H1 (cell line): ENCODE measurements at regions of chrX and their contacts with region 1.

Region 1: GRCh38 chrX:108224727-108225621 is 133.4 kb downstream of the ATG4A start:
- DNase-seq: no peak
- H3K4me3 ChIP-seq: no peak overlapping the region
- H3K27ac ChIP-seq: no peak overlapping the region
- H3K4me1 ChIP-seq: no peaks in the 10 kb centered on the region
- H3K27me3 ChIP-seq: no peaks in the 10 kb centered on the region
- CTCF ChIP-seq: peak in 2 of 3 experiments; percentile 51 to 52; a peak in 3 of 4 replicates
- EP300 ChIP-seq: no peak
- POLR2A ChIP-seq: no peak
- RAD21 ChIP-seq: peak; percentile 81 to 82

Region 2: GRCh38 chrX:108211301-108211700 is 13.7 kb before region 1 on chrX:
- CTCF ChIA-PET with region 1: interaction called, 18 read pairs
- POLR2A ChIA-PET with region 1: no interaction called
- DNase-seq: no peak
- H3K4me3 ChIP-seq: no peak overlapping the region
- H3K27ac ChIP-seq: no peak overlapping the region
- H3K4me1 ChIP-seq: no peaks in the 10 kb centered on the region
- H3K27me3 ChIP-seq: no peaks in the 10 kb centered on the region
- CTCF ChIP-seq: no peak
- EP300 ChIP-seq: no peak
- POLR2A ChIP-seq: no peak
- RAD21 ChIP-seq: no peak

Region 3: GRCh38 chrX:108235986-108236385 is 11.0 kb after region 1 on chrX:
- CTCF ChIA-PET with region 1: interaction called, 12 read pairs
- POLR2A ChIA-PET with region 1: no interaction called
- DNase-seq: no peak
- H3K4me3 ChIP-seq: no peak overlapping the region
- H3K27ac ChIP-seq: no peak overlapping the region
- H3K4me1 ChIP-seq: no peaks in the 10 kb centered on the region
- H3K27me3 ChIP-seq: no peaks in the 10 kb centered on the region
- CTCF ChIP-seq: no peak
- EP300 ChIP-seq: no peak
- POLR2A ChIP-seq: no peak
- RAD21 ChIP-seq: no peak

Region 4: DNA sequence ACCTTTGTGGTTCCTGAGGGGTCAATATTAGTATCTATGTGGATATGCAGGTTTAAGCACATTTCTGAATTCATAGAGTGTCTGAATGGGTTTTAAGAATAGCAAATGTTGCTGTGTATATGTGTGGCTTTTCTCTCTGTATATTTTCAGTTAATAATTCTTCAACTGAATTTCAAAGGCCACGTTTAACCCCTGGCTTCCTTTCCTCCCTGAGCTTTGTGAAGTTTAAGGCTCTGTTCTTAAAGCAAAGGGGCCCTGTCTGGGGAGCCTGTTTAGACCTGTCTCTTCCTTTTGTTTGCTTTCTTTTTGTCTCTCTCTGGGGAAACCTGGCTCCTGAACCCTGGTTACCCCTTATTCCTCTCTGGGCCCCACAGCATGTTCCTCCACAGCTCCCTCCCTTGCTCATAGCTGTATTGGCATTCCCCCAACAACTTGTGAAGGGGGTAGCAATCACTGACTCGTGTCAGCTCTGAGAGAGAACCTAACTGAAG is 74.2 kb after region 1 on chrX:
- CTCF ChIA-PET with region 1: interaction called, 38 read pairs
- POLR2A ChIA-PET with region 1: no interaction called
- DNase-seq: no peak
- H3K4me3 ChIP-seq: no peak overlapping the region
- H3K27ac ChIP-seq: no peak overlapping the region; the same call in 1 of the 2 replicates
- H3K4me1 ChIP-seq: peaks cover 0 to 9% (median 2%) of the 10 kb centered on the region in 4 experiments; a peak in 3 of 7 replicates
- H3K27me3 ChIP-seq: no peaks in the 10 kb centered on the region
- CTCF ChIP-seq: no peak
- EP300 ChIP-seq: no peak
- POLR2A ChIP-seq: no peak
- RAD21 ChIP-seq: no peak

Region 5: GRCh38 chrX:108304210-108304609 is 79.2 kb after region 1 on chrX:
- CTCF ChIA-PET with region 1: interaction called, 38 read pairs
- POLR2A ChIA-PET with region 1: no interaction called
- DNase-seq: no peak
- H3K4me3 ChIP-seq: no peak overlapping the region
- H3K27ac ChIP-seq: no peak overlapping the region
- H3K4me1 ChIP-seq: peaks cover 0 to 3% (median 1%) of the 10 kb centered on the region in 4 experiments; a peak in 3 of 7 replicates
- H3K27me3 ChIP-seq: no peaks in the 10 kb centered on the region
- CTCF ChIP-seq: peak in 2 of 3 experiments; percentile 46 to 51; a peak in 3 of 4 replicates
- EP300 ChIP-seq: no peak
- POLR2A ChIP-seq: no peak
- RAD21 ChIP-seq: peak; percentile 65 to 73

Region 6: GRCh38 chrX:108468486-108468885 is 243.5 kb after region 1 on chrX:
- CTCF ChIA-PET with region 1: no interaction called
- POLR2A ChIA-PET with region 1: no interaction called
- DNase-seq: no peak
- H3K4me3 ChIP-seq: no peak overlapping the region
- H3K27ac ChIP-seq: no peak overlapping the region
- H3K4me1 ChIP-seq: no peaks in the 10 kb centered on the region
- H3K27me3 ChIP-seq: no peaks in the 10 kb centered on the region
- CTCF ChIP-seq: no peak
- EP300 ChIP-seq: no peak
- POLR2A ChIP-seq: no peak
- RAD21 ChIP-seq: no peak

Region 7: GRCh38 chrX:108537005-108537404 is 312.0 kb after region 1 on chrX:
- CTCF ChIA-PET with region 1: interaction called, 31 read pairs
- POLR2A ChIA-PET with region 1: no interaction called
- DNase-seq: no peak
- H3K4me3 ChIP-seq: no peak overlapping the region
- H3K27ac ChIP-seq: no peak overlapping the region
- H3K4me1 ChIP-seq: 0 out of 7 replicates have a peak, but pooled peaks cover 0 to 6% (median 0%) of the 10 kb centered on the region in 4 experiments
- H3K27me3 ChIP-seq: no peaks in the 10 kb centered on the region
- CTCF ChIP-seq: peak in 2 of 3 experiments; percentile 41 to 46; a peak in 3 of 4 replicates
- EP300 ChIP-seq: no peak
- POLR2A ChIP-seq: no peak
- RAD21 ChIP-seq: peak; percentile 79 to 80